ENCODE measurements at regions of chr17 and their contacts with region 1.

Region 1: DNA sequence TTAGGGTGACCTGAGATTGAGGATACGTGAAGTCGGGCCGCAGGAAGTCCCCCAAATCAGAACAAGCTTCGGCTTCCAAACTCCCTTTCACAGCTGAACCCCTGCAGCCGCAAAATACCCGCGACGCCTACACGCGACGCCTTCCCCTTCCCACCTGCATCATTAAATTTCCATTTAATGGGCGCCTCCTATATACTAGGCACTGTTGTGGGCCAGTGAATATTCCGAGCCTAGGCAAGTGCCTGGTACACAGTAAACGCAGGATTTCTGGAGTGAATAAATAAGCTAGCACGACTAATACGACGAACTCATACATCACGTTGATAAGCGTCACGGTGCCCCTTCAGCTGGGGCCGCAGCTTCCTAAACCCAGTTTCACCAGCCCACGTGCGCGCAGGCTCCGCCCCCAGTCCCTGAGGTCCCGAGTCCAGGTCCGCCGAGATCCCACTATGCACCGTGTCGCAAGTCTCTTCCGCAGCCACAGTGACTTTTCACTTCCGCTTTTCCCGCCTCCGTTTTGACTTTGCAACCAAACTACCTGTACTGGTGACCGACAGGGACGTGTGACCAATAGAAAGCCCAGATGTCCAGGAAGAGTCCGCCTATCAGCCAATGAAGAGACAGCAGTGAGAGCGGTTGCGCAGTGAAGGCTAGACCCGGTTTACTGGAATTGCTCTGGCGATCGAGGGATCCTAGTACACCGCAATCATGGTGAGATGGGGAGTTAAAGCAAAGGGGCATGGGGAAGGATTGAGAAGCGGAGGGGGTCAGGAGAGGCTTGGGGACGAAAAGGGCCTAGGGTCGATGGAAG is at the start of gene PSMB3:
- DNase-seq: peak; percentile 97 to 100
- H3K4me3 ChIP-seq: peak within 1 kb of the TSS; percentile 79 to 93
- H3K27ac ChIP-seq: peak within 1 kb of the TSS; percentile 86 to 89
- H3K4me1 ChIP-seq: peaks cover 0 to 29% of the 10 kb centered on the region in 2 donors
- H3K27me3 ChIP-seq: no peaks in the 10 kb centered on the region
- CTCF ChIP-seq: no peak
- total RNA-seq, gene PSMB3: 189 TPM

Region 2: DNA sequence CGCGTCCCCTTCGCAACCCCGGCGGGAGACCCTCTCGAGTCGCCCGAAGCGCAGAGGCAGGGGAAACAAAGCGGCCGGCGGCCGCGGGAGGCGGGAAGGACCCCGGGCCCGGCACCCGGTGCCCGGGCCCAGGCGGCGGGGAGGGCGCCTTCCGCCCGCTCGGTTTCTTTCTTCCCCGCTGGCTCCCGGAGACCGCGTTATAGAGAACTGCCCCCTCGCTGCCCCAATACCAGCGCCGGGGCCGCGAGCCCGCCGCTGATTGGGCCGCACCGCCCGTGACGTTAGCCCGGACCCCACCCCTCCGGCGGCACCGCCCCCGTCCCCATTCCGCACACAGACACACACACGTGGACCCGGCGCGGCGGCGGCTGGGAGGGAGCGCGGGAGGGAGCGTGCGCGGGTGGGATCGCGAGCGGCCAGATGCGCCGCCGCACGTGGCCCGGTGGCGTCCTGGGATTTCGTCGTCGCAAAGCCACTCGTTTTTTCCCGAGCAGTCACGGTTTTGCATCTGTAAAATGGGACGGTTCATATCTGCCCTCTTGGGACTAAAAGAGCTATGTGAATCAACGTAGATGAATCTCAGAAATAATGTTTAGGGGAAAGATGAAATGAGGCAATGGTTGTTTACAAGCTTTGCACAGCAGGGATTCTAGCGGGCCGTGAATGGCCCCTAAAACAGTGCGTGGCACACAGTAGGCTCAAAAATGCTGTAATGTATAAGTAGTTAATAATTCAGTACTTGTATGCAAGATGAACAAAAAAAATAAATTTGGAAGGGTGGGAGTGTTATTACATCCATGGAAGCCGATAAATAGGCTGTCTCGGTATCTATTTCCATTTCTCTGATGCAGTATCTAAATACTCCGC is 77.3 kb before region 1 on chr17 and contains the start of gene EPOP:
- intact Hi-C with region 1: loop called (anchors 5 kb)
- DNase-seq: peak; percentile 65 to 91
- H3K4me3 ChIP-seq: peak within 1 kb of the TSS; percentile 70
- H3K27ac ChIP-seq: no peak within 1 kb of the TSS
- H3K4me1 ChIP-seq: peaks cover 10 to 18% of the 10 kb centered on the region in 2 donors
- H3K27me3 ChIP-seq: peaks cover 20% of the 10 kb centered on the region
- CTCF ChIP-seq: no peak
- total RNA-seq, gene EPOP: 2.1 TPM

Region 3: DNA sequence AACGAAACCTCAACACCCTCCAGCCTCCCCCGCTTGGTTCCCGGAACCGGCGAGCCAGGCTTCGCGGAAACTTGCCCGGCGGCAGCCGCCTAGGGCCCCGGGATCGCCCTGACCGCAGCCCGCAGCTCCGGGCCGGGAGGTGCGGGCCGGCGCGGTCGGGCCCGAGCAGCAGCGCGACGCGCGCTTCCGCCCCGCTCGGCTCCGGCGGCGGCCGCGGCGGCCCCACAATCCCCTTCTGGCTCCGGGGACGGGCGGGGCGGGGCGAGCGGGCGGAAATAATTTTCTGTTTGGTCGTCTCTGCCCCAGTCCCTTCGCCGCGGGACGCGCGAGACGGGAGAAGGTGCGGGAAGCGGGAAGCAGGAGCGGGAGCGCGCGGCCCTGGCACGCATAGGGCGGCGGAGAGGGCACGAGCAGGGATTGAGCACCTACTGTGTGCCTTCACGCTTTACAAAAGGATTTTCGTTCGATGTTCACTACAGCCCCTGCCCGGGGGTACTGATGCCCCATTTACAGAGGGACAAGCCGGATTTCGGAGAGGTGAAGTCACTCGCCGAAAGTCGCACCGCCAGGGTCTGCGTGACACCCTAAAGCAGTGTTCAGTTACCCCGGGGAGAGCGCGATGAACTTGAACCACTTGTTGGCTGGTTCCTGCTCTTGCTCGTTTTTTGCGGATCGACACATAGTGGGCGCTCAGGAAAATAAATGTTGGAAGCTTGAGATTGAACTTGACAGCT is 50.0 kb before region 1 on chr17:
- intact Hi-C with region 1: loop called (anchors 2 kb)
- DNase-seq: peak; percentile 59 to 94
- H3K4me3 ChIP-seq: peak overlapping the region; percentile 97 to 98
- H3K27ac ChIP-seq: peak overlapping the region; percentile 93 to 98
- H3K4me1 ChIP-seq: peaks cover 4 to 17% of the 10 kb centered on the region in 2 donors
- H3K27me3 ChIP-seq: no peaks in the 10 kb centered on the region
- CTCF ChIP-seq: no peak

Region 4: GRCh38 chr17:38729886-38730525 is 22.3 kb before region 1 on chr17 and contains the start of gene CISD3:
- intact Hi-C with region 1: loop called (anchors 1 kb)
- DNase-seq: peak in 1 of 2 donors; percentile 91
- H3K4me3 ChIP-seq: peak within 1 kb of the TSS; percentile 89 to 93
- H3K27ac ChIP-seq: peak within 1 kb of the TSS; percentile 86 to 89
- H3K4me1 ChIP-seq: peaks cover 5 to 20% of the 10 kb centered on the region in 2 donors
- H3K27me3 ChIP-seq: no peaks in the 10 kb centered on the region
- CTCF ChIP-seq: peak; percentile 19 to 98 (median 47)
- total RNA-seq, gene CISD3: 27.6 TPM

Region 5: GRCh38 chr17:38799378-38800236 is 47.3 kb after region 1 on chr17 and contains the start of gene PIP4K2B:
- intact Hi-C with region 1: loop called (anchors 1 kb)
- DNase-seq: peak; percentile 85 to 98
- H3K4me3 ChIP-seq: peak within 1 kb of the TSS; percentile 88 to 93
- H3K27ac ChIP-seq: peak within 1 kb of the TSS; percentile 98 to 100
- H3K4me1 ChIP-seq: peaks cover 7 to 25% of the 10 kb centered on the region in 2 donors
- H3K27me3 ChIP-seq: no peaks in the 10 kb centered on the region
- CTCF ChIP-seq: no peak
- total RNA-seq, gene PIP4K2B: 45.0 TPM

Region 6: DNA sequence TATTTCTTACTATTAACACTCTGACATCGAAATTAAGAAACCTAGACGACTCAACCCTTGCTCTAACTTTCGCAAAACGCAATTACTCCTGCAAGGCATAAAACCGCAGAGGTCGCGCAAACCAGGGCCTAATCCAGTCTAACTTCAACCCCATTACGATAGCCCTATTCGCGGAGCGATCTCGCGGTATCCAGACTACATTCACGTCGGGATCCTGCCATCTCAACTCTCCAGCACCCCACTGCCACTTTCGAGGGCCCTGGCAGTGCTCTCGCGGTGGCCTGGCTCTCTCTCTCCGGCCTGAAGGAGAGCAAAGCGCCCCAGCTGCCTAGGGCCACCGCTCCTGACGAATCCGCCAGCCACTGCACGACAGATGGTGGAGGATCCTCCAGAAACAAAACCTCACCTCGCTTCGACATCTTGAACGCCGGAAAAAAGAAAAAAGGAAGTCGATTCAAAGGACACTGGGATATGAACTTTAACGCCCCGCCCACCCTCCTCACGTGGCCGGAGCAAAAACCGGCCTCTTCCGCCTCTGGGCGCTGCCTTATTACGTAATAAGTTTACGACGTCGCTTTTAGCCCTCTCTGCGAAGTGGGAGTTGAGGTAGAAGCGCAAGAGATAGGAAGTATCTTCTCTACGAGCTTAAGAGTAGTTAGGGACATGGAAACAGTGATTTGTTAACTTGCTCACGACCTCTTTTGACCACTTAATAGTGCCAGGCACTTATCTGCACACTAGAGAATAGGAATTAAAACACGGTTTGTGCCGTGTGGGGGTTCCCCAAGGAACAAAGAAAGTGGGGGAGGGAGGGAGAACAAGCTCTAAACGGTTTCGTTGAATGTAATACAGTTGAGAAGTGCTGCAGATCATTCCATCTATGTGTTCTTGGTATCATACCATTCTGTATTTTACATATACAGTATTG is 101.2 kb after region 1 on chr17 and contains the start of gene RPL23:
- intact Hi-C with region 1: loop called (anchors 1 kb)
- DNase-seq: peak; percentile 81 to 97
- H3K4me3 ChIP-seq: peak within 1 kb of the TSS; percentile 70 to 80
- H3K27ac ChIP-seq: peak within 1 kb of the TSS; percentile 87 to 91
- H3K4me1 ChIP-seq: peaks cover 13 to 19% of the 10 kb centered on the region in 2 donors
- H3K27me3 ChIP-seq: no peaks in the 10 kb centered on the region
- CTCF ChIP-seq: no peak
- total RNA-seq, gene RPL23: 1,091 TPM

Region 7: GRCh38 chr17:39153599-39154051 is 401.3 kb after region 1 on chr17:
- intact Hi-C with region 1: loop called (anchors 1 kb)
- DNase-seq: peak; percentile 90 to 98
- H3K4me3 ChIP-seq: peak overlapping the region; percentile 85 to 94
- H3K27ac ChIP-seq: peak overlapping the region; percentile 84 to 94
- H3K4me1 ChIP-seq: peaks cover 12 to 15% of the 10 kb centered on the region in 2 donors
- H3K27me3 ChIP-seq: no peaks in the 10 kb centered on the region
- CTCF ChIP-seq: peak in 2 of 3 experiments; percentile 16 to 33